ENCODE measurements at regions of chr6 and their contacts with region 1.

Region 1: DNA sequence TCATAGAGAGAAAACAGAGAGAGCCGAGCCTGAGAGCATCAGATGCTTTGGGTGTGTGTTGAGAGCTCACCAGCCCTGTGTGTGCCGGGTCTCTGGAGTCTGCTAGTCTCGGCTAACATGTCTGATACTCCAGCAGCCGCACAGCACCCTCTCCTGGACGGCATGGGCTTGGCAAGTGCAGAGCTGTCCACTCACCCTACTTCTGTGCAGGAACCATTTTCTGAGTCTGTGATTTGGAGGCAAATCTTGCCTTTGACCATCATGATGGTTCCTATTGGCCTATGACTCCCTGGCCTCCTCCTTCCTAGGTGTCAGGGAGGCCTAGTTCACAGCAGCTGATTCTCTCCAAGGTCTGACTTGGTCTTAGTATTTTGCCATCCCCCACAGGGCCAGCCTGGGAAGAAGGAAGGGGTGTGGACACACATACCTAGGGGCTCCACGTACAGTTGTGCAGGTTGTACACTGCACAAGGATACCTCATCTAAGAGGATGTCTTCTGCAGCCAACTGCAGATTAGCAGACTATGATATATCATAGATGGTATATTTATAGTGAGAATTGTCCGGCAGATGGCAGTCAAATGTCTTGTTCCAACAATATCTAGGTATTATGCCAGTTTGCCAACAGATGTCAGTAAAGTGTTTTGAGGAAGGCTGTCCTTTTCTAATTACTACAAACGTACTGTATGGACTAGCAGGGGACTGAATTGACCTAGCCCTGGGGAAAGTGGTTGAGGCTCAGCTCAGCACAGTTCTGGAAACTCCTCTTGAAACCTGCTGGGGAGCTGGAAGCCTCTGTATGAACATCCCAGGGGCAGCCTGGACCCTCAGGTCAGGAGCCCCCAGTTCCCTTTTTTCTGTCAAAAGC is 13.0 kb downstream of the FGD2 start:
- DNase-seq: peak; percentile 94
- ATAC-seq: peak; percentile 97

Region 2: GRCh38 chr6:36414481-36414880 is 604.0 kb before region 1 on chr6:
- intact Hi-C with region 1: no loop called
- DNase-seq: no peak
- ATAC-seq: no peak

Region 3: GRCh38 chr6:36962874-36963273 is 55.6 kb before region 1 on chr6:
- intact Hi-C with region 1: no loop called
- DNase-seq: peak; percentile 85
- ATAC-seq: peak; percentile 19

Region 4: GRCh38 chr6:37207903-37208456 is 189.5 kb after region 1 on chr6:
- intact Hi-C with region 1: loop called (anchors 2 kb)
- DNase-seq: peak; percentile 91
- ATAC-seq: peak; percentile 77

Measured in Right ventricle myocardium superior (tissue), 1 donor.